OCI-LY7 (cell line): ENCODE measurements at regions of chr2 and their contacts with region 1.

Region 1: GRCh38 chr2:196182439-196183171 is 11.2 kb upstream of the STK17B start:
- DNase-seq: peak; percentile 60
- H3K4me3 ChIP-seq: peak overlapping the region; percentile 31
- H3K27ac ChIP-seq: peak overlapping the region; percentile 82
- H3K4me1 ChIP-seq: peaks cover 98% of the 10 kb centered on the region
- CTCF ChIP-seq: no peak

Region 2: GRCh38 chr2:196046123-196046917 is 136.3 kb before region 1 on chr2:
- CTCF ChIA-PET with region 1: no interaction called
- POLR2A ChIA-PET with region 1: no interaction called
- intact Hi-C with region 1: no loop called
- DNase-seq: no peak
- H3K4me3 ChIP-seq: no peak overlapping the region
- H3K27ac ChIP-seq: no peak overlapping the region
- H3K4me1 ChIP-seq: no peaks in the 10 kb centered on the region
- CTCF ChIP-seq: no peak

Region 3: GRCh38 chr2:196195302-196195701 is 12.7 kb after region 1 on chr2:
- CTCF ChIA-PET with region 1: interaction called, 3 read pairs
- POLR2A ChIA-PET with region 1: interaction called, 104 read pairs
- intact Hi-C with region 1: no loop called
- DNase-seq: no peak
- H3K4me3 ChIP-seq: peak overlapping the region; percentile 35
- H3K27ac ChIP-seq: peak overlapping the region; percentile 10
- H3K4me1 ChIP-seq: peaks cover 34% of the 10 kb centered on the region
- CTCF ChIP-seq: no peak

Region 4: DNA sequence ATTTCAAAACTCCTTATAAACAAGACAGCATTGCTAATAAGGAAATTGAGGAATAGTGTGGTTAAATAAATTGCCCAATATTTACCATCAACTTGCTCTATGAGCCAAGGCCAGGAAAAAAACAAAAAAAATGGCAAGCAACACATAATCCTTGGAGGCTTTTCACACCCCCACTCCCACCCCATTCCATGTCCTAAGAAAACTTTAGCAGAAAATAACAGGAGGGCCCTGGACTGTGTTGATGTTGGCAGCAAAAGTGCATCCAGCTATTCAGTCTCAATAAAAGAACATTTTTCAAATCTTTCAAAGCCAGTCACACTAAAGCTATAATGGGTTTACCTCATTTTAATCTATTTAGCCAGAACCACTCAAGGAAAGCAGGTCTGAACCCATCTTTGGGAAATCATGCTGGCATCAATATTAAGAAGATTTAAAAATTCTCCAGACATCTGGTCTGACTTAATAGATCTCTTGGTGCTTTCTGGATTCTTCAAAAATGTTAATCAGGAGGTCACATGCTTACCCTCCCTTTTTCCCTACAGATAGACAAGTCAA is 23.4 kb after region 1 on chr2:
- CTCF ChIA-PET with region 1: no interaction called
- POLR2A ChIA-PET with region 1: interaction called, 33 read pairs
- intact Hi-C with region 1: no loop called
- DNase-seq: no peak
- H3K4me3 ChIP-seq: no peak overlapping the region
- H3K27ac ChIP-seq: no peak overlapping the region
- H3K4me1 ChIP-seq: peaks cover 55% of the 10 kb centered on the region
- CTCF ChIP-seq: no peak

Region 5: DNA sequence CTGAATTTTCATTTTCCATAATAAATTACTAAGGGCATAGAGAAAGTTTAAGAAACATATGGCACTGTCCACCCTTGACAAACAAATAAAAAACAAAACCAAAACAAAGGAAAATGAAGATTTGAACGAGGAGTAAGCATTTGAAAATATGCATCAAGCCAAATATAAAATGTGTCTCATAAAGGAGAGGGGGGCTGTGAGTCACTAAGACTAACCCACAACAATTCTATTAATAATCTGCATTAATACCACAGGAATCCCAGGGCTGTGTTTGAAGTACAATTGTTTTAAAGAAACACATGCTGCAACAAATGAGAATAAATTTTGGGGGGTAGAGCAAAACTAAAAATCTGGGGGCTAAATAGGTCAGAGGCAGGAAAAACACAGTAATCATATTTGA is 42.6 kb after region 1 on chr2:
- CTCF ChIA-PET with region 1: no interaction called
- POLR2A ChIA-PET with region 1: interaction called, 139 read pairs
- intact Hi-C with region 1: no loop called
- DNase-seq: no peak
- H3K4me3 ChIP-seq: no peak overlapping the region
- H3K27ac ChIP-seq: no peak overlapping the region
- H3K4me1 ChIP-seq: peaks cover 23% of the 10 kb centered on the region
- CTCF ChIP-seq: no peak

Region 6: GRCh38 chr2:196268538-196269338 is 86.1 kb after region 1 on chr2:
- CTCF ChIA-PET with region 1: interaction called, 23 read pairs
- POLR2A ChIA-PET with region 1: interaction called, 226 read pairs
- intact Hi-C with region 1: no loop called
- DNase-seq: peak; percentile 48
- H3K4me3 ChIP-seq: peak overlapping the region; percentile 36
- H3K27ac ChIP-seq: peak overlapping the region; percentile 66
- H3K4me1 ChIP-seq: peaks cover 89% of the 10 kb centered on the region
- CTCF ChIP-seq: no peak